PC-9 (cell line): ENCODE measurements at regions of chr6 and their contacts with region 1.

Region 1: GRCh38 chr6:39610221-39610620 is 115.0 kb downstream of the KIF6 start:
- DNase-seq: no peak
- H3K4me3 ChIP-seq: no peak overlapping the region
- H3K27ac ChIP-seq: no peak overlapping the region
- H3K4me1 ChIP-seq: no peaks in the 10 kb centered on the region
- H3K27me3 ChIP-seq: peaks cover 22% of the 10 kb centered on the region; the same call in 1 of the 2 replicates
- CTCF ChIP-seq: no peak

Region 2: GRCh38 chr6:39476151-39476550 is 134.1 kb before region 1 on chr6:
- CTCF ChIA-PET with region 1: no interaction called
- POLR2A ChIA-PET with region 1: interaction called, 10 read pairs
- intact Hi-C with region 1: no loop called
- DNase-seq: no peak
- H3K4me3 ChIP-seq: no peak overlapping the region
- H3K27ac ChIP-seq: no peak overlapping the region
- H3K4me1 ChIP-seq: no peaks in the 10 kb centered on the region
- H3K27me3 ChIP-seq: peaks cover 16% of the 10 kb centered on the region
- CTCF ChIP-seq: no peak